ENCODE measurements at regions of chr6 and their contacts with region 1.

Region 1: DNA sequence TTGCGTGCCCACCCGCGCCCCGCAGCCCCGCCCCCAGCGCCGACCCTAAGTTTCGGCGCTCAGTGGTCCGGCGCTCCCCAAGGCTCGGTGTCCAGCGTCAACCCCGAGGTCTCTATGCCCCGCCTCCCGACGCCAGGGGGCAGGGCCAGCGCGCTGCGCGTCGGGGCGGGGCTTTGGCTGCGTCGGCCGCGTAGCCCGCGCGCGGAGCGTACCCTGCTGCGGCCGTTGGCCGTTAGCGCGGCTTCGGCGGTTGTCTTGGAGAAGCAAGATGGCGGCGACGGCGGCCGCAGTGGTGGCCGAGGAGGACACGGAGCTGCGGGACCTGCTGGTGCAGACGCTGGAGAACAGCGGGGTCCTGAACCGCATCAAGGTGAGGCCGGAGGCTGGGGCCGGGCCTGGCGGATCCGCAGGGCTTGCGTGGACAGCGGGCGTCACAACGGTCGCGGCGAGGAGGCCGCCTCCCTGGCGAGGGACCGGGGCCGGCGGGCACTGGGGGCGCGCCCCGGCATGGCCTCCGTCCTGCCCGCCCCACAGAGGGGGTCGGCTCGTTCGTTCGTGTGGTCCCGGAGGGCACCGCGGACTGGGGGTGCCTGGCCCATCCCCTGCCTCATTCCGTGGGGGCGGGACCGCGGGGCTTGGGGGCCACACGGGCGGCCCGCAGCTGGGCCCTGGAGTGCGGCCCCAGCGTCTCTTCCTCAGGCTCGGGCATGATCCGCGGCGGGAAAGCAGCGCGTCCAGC is at the start of gene CEP43:
- DNase-seq: peak; percentile 91
- ATAC-seq: peak; percentile 96
- H3K4me3 Mint-ChIP-seq: peak within 1 kb of the TSS; percentile 85
- H3K27ac Mint-ChIP-seq: peak within 1 kb of the TSS; percentile 78
- H3K4me1 Mint-ChIP-seq: peaks cover 26% of the 10 kb centered on the region
- H3K27me3 Mint-ChIP-seq: no peaks in the 10 kb centered on the region
- total RNA-seq, gene CEP43: 19.9 to 20.0 TPM

Region 2: DNA sequence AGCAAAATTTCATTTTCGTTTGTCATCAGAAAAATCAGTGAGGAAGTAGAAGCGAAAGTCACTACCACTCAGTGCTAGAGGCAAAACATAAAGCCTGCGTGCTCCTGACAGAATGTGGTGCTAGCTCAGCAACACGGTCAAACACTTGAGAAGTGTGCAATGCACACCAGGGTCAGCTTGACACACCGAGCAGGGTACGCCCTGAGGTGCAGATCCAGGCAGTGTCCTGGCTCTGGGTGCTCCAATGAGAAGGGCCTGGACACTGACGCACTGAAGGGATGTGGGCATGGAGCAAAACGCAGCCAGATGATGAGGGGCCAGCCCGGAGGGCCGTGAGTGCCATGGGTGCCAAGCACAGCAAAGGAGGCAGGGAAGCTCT is 48.9 kb before region 1 on chr6:
- CTCF ChIA-PET with region 1: interaction called, 5 read pairs
- POLR2A ChIA-PET with region 1: no interaction called
- intact Hi-C with region 1: loop called in 1 of 2 experiments (anchors 1 kb)
- DNase-seq: peak; percentile 48
- ATAC-seq: peak; percentile 34
- H3K4me3 Mint-ChIP-seq: peak overlapping the region; percentile 61
- H3K27ac Mint-ChIP-seq: peak overlapping the region; percentile 95
- H3K4me1 Mint-ChIP-seq: peaks cover 62% of the 10 kb centered on the region
- H3K27me3 Mint-ChIP-seq: no peaks in the 10 kb centered on the region

Region 3: GRCh38 chr6:167113935-167114910 is 114.9 kb after region 1 on chr6:
- CTCF ChIA-PET with region 1: no interaction called
- POLR2A ChIA-PET with region 1: no interaction called
- intact Hi-C with region 1: loop called in 1 of 2 experiments (anchors 1 kb)
- DNase-seq: peak; percentile 83
- ATAC-seq: peak; percentile 68
- H3K4me3 Mint-ChIP-seq: peak overlapping the region; percentile 73
- H3K27ac Mint-ChIP-seq: peak overlapping the region; percentile 84
- H3K4me1 Mint-ChIP-seq: peaks cover 63% of the 10 kb centered on the region
- H3K27me3 Mint-ChIP-seq: no peaks in the 10 kb centered on the region

Region 4: GRCh38 chr6:167350731-167351655 is 351.7 kb after region 1 on chr6:
- CTCF ChIA-PET with region 1: interaction called, 5 read pairs
- POLR2A ChIA-PET with region 1: no interaction called
- intact Hi-C with region 1: loop called in 1 of 2 experiments (anchors 1 kb)
- DNase-seq: peak; percentile 96
- ATAC-seq: peak; percentile 80
- H3K4me3 Mint-ChIP-seq: peak overlapping the region; percentile 57
- H3K27ac Mint-ChIP-seq: peak overlapping the region; percentile 90
- H3K4me1 Mint-ChIP-seq: peaks cover 27% of the 10 kb centered on the region
- H3K27me3 Mint-ChIP-seq: peaks cover 39% of the 10 kb centered on the region